Activated CD4-positive, alpha-beta T cell treated with anti-CD3 and anti-CD28 coated beads, Interleukin-2, amount 10 ng/mL, durations not matched to agents 24 days and 14 days (primary cell): ENCODE measurements at regions of chr3 and their contacts with region 1.

Region 1: DNA sequence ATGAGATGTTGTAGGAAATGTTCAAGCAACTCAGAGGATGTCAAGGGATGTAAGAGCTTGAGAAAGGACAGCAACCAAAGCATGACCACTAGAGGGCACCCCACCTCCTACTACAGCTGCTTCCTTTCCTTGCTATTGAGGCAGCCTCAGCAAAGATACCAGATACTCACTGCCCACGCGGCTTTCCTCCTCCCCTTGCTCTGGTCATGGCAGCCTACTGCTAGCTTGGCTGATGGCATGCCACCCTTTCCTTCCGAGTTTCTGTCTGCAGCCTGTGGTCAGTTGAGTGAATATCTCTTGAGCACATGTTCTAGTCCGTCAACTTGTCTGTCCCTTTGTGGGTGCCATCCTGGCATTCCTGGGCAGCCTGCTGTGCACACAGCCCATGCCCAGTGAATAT is 4.4 kb upstream of the CXCR6 start:
- DNase-seq: peak; percentile 94
- H3K4me3 Mint-ChIP-seq: no peak overlapping the region
- H3K27ac Mint-ChIP-seq: peak overlapping the region; percentile 23
- H3K4me1 Mint-ChIP-seq: peaks cover 50% of the 10 kb centered on the region
- H3K27me3 Mint-ChIP-seq: no peaks in the 10 kb centered on the region

Region 2: DNA sequence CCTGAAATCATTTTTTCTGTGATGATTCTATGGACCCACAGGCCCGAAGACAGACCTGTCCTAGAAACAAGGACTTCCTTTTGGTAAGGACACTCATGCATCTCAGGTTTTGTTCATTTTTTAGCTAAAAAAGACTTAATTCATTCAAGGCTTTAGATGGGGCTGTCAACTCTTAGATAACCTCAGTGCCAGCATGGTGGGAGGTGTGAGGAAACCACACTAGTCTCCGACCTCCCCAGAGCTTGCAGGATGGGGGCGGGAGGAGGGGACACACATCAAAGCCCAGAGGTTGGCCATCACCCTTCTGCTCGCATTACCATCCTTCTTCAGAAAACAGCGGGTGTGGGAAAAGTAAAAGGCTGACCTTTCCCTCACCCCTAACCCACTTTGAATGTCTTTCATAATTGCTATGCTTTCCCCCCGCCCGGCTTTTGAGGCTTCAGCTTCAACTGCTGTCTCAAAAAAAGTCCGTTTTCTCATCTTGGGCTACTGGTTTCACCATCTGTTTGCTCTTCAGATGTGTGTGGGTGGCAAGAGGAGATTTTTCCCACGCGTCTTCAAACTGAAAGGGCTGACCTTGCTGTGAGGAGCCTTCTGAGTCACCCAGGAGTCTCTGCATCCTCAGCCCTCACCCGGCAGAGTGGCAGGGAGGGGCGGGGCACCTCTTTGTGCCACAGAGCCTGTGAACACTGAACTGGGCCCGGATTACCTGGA is 23.2 kb before region 1 on chr3:
- intact Hi-C with region 1: loop called (anchors 2 kb)
- DNase-seq: peak; percentile 89
- H3K4me3 Mint-ChIP-seq: peak overlapping the region; percentile 23
- H3K27ac Mint-ChIP-seq: peak overlapping the region; percentile 49
- H3K4me1 Mint-ChIP-seq: peaks cover 29% of the 10 kb centered on the region
- H3K27me3 Mint-ChIP-seq: peaks cover 25% of the 10 kb centered on the region

Region 3: DNA sequence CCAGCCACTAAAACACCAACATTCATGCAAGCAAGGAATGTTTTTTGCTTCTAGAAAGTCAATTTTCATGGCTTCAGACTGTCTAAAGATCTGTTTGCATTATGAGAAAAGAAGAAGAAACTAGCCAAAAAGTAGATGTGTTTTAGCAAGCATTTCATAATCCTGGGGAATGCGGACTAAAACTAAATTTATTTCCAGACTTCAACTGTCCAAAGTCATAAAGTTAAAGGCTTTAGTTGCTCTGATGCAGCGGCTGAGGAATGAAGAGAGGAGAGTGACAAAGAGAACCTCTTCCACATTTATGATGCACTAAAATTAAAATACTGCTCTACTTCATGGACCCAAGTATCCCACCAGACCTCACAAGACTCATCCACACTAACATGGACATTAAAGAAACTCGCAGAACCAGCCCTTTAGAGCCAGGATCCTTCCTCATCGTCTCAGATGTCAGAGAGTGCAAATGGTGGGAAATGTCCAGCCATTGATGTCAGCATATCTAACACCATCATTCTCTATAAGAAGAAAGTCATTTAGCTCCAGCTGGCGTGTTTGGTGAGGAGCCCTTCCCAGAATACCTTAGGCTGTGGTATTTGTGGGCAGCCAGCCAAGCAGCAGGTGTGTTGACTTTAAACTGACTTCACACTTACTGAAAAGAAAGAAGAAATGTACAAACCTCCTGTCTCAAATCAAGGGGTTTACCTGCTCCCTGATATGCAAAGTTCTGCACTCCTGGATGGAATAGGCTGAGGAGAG is 39.3 kb after region 1 on chr3:
- intact Hi-C with region 1: loop called (anchors 1 kb)
- DNase-seq: peak; percentile 91
- H3K4me3 Mint-ChIP-seq: peak overlapping the region; percentile 80
- H3K27ac Mint-ChIP-seq: peak overlapping the region; percentile 95
- H3K4me1 Mint-ChIP-seq: peaks cover 84% of the 10 kb centered on the region
- H3K27me3 Mint-ChIP-seq: no peaks in the 10 kb centered on the region

Region 4: DNA sequence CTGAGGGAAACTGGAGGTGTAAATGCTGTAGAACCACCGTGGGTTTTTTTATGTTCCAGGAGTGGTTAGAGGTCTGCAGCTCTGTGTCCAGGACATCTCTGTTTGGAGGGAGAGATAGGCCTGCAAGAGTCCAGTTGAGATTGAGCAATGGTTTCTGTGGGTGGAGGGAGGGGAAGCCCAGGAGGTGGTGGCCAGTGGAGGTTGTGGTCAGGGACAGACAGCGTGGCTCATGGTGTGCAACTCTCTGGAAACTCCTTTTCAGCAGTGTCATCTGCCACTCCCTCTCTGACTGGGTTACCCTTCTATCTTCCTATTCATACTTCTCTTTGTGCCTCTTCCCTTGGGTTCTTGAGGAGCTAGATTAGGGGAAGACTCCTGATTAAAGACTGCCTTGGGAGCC is 78.9 kb after region 1 on chr3:
- intact Hi-C with region 1: loop called (anchors 2 kb)
- DNase-seq: no peak
- H3K4me3 Mint-ChIP-seq: peak overlapping the region; percentile 4
- H3K27ac Mint-ChIP-seq: peak overlapping the region; percentile 79
- H3K4me1 Mint-ChIP-seq: peaks cover 42% of the 10 kb centered on the region
- H3K27me3 Mint-ChIP-seq: peaks cover 10% of the 10 kb centered on the region

Region 5: DNA sequence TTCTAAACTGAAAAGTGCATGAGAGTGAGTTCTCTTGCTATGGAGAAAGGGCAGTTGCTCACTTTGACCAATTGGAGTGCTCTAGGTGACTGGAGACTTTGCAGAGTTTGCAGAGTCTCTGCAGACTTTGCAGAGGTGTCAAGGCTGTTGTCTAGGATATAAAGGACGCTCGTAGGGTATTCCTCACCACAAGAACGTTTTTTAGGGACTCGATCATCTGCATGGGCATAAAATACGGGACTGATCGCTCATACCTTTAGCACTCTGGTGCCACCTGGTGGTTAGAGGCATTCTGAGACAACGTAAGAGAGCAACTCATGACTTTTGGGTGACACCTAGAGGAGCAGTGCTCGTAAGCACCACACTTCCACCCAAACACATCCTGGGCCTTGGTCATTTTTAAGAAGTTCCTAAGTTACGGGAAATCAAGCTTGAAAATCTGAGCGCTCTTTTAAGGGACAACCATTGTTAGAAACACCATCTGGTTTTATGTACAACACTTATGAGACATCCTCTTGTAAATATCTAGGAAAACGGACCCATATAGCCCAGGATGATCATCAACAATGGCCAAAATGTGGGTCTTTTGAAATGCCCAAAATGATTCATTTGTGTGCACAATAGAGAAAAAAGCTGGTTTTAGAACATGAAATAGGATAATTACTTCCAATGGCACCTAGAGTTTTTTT is 140.0 kb after region 1 on chr3:
- intact Hi-C with region 1: loop called (anchors 1 kb)
- DNase-seq: peak; percentile 97
- H3K4me3 Mint-ChIP-seq: peak overlapping the region; percentile 51
- H3K27ac Mint-ChIP-seq: no peak overlapping the region
- H3K4me1 Mint-ChIP-seq: peaks cover 35% of the 10 kb centered on the region
- H3K27me3 Mint-ChIP-seq: peaks cover 18% of the 10 kb centered on the region

Region 6: GRCh38 chr3:46372492-46373359 is 433.9 kb after region 1 on chr3:
- intact Hi-C with region 1: loop called (anchors 2 kb)
- DNase-seq: peak; percentile 82
- H3K4me3 Mint-ChIP-seq: peak overlapping the region; percentile 36
- H3K27ac Mint-ChIP-seq: peak overlapping the region; percentile 57
- H3K4me1 Mint-ChIP-seq: peaks cover 67% of the 10 kb centered on the region
- H3K27me3 Mint-ChIP-seq: peaks cover 32% of the 10 kb centered on the region

Region 7: DNA sequence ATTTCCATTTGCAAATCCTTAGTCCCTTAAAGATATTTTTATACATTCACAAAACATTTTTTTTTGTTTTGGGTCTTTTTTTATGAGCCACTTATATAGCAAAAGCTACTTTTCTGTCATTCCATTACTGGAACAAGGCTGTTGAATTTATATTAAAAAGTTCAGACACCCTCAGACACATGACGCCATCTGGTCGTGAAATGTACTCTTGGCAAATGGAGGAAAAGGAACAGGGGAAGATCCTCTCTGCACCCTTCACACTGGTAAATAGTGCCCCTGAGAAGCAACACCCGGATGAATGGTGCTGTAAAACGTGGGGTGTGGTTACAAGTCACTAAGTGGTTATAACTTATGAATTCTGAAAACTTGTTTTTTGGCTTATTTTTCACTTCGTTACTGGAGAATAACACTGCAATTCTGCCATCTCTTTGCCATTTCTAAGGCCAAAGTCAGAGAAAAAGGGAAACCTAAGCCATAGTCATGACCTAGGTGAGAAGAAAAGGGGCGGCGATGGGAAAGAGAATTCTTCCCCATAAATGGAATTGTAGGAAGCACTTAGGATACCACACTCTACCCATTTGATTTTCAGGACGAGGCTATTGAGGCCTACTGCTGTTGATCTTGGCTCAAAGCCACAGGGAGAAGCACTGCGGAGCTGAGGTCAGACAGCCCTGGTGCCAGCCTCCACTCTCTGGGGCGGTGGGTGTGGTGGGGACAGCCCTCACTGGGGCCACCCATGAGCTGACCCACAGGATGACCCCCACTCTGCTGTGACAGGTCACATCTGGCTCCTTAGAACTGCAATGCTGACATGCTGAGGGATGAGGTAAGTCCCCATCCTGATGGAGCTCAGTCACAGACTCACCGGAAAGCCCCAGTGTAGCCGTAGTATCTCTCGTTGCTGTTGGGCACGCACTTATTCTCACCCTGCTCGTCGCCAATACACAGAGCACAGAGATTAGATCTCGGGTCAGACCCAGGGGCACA is 504.0 kb after region 1 on chr3:
- intact Hi-C with region 1: loop called (anchors 5 kb)
- DNase-seq: peak; percentile 85
- H3K4me3 Mint-ChIP-seq: no peak overlapping the region
- H3K27ac Mint-ChIP-seq: no peak overlapping the region
- H3K4me1 Mint-ChIP-seq: peaks cover 25% of the 10 kb centered on the region
- H3K27me3 Mint-ChIP-seq: peaks cover 7% of the 10 kb centered on the region